ENCODE measurements at regions of chr2 and their contacts with region 1.

Region 1: DNA sequence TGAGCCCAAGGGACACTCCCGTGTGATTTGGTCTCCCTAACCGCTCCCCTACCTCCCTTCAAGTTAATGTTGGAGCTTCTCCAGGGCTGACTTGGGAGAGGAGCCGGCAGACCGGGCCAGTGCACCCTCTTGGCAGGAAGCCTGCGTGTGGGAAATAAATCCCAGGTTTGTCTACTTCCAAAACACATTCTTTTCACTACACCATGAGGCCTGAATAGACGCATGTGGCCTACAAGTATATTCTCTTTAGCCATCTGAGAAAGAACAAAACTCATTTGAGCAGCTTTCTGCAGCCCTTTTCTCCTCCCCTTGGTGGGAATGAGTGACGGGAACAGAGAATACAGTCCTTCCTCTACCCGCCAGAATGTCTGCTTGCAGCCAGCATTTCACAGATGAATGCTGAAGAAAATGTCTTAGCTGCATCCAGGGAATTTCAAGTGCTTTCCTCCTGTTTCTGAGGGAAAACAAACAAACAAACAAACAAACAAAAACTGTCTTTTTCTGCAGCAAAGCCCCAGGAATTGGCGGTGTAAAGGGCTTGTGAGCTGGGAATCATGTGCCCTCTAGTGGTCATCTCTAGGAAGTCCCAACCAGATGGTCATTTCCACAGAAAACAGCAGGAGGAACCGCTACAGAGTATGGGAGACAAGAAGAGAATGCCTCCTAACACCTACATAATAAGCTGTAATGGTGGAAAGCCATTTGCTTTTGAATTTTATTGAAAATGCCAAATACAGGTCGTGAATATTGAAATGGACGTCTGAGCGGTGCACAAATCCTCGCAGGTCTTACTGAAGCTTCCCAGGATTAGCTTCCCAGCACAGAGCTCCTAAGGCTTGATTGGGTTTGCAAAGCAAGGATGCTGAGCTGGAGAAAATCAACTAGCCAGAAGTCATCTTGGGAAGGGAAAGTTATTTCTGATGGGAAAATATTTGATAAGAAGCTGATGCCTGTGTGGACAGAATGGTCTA is 41.2 kb upstream of the DAPL1 start:
- DNase-seq: peak; percentile 44
- ATAC-seq: peak; percentile 63
- H3K4me3 Mint-ChIP-seq: no peak overlapping the region
- H3K27ac Mint-ChIP-seq: no peak overlapping the region
- H3K4me1 Mint-ChIP-seq: peaks cover 3% of the 10 kb centered on the region
- H3K27me3 Mint-ChIP-seq: peaks cover 11% of the 10 kb centered on the region

Region 2: GRCh38 chr2:158034199-158034866 is 719.6 kb before region 1 on chr2:
- CTCF ChIA-PET with region 1: interaction called, 8 read pairs
- POLR2A ChIA-PET with region 1: no interaction called
- intact Hi-C with region 1: loop called in 1 of 2 experiments (anchors 1 kb)
- DNase-seq: peak; percentile 26
- ATAC-seq: peak; percentile 69
- H3K4me3 Mint-ChIP-seq: no peak overlapping the region
- H3K27ac Mint-ChIP-seq: no peak overlapping the region
- H3K4me1 Mint-ChIP-seq: no peaks in the 10 kb centered on the region
- H3K27me3 Mint-ChIP-seq: peaks cover 3% of the 10 kb centered on the region

Region 3: DNA sequence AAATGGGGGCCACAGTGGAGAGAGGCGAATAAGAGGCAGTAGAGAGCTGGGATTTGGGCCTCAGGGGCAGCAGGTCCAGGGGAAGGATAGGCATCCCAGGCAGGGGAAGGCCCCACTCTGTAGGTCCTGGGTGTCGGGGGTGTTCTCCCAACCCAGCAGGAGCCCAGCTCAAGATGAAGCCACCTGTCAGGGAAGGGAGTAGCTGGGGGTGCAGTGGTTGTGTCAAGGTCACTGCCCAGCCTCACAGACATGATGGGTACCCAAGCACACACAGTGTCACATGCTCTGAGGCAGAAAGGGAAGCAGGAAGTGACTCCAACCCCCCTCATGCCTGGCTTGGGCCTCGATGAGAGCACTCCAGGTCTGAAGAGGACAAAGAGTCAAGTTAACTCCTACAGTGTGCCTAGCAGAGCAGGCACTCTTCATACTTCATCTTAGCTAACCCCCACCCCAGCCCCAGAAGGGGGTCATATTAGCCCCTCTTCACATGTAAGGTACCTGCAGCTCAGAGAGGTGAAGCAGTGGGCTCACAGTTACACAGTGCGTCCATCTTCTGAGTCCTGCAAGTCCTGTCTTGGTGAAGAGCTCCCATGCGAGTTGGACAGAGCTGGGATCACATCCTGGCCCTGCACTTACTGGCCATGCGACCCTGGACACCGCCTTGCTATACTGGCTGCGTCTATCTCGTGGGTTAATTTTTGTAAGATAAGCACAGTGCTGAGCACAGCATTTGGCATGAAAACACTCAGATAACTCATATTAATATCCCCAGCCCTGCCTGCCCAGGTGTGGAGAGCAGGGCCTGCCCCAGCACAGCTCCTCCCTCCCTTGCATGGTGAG is 31.4 kb before region 1 on chr2:
- CTCF ChIA-PET with region 1: no interaction called
- POLR2A ChIA-PET with region 1: no interaction called
- intact Hi-C with region 1: no loop called
- DNase-seq: no peak
- ATAC-seq: no peak
- H3K4me3 Mint-ChIP-seq: no peak overlapping the region
- H3K27ac Mint-ChIP-seq: no peak overlapping the region
- H3K4me1 Mint-ChIP-seq: no peaks in the 10 kb centered on the region
- H3K27me3 Mint-ChIP-seq: peaks cover 2% of the 10 kb centered on the region

Region 4: GRCh38 chr2:158766524-158766923 is 12.6 kb after region 1 on chr2:
- CTCF ChIA-PET with region 1: interaction called, 11 read pairs
- POLR2A ChIA-PET with region 1: no interaction called
- intact Hi-C with region 1: no loop called
- DNase-seq: no peak
- ATAC-seq: no peak
- H3K4me3 Mint-ChIP-seq: no peak overlapping the region
- H3K27ac Mint-ChIP-seq: no peak overlapping the region
- H3K4me1 Mint-ChIP-seq: no peaks in the 10 kb centered on the region
- H3K27me3 Mint-ChIP-seq: peaks cover 2% of the 10 kb centered on the region